CD14-positive monocyte (primary cell): ENCODE measurements at regions of chr15 and their contacts with region 1.

Region 1: GRCh38 chr15:74768771-74769342 is 13.0 kb upstream of the CSK start:
- DNase-seq: peak; percentile 60 to 75 (median 71)
- H3K4me3 ChIP-seq: no peak overlapping the region
- H3K4me3 Mint-ChIP-seq: peak overlapping the region in 1 of 2 donors; percentile 50
- H3K27ac ChIP-seq: no peak overlapping the region
- H3K27ac Mint-ChIP-seq: no peak overlapping the region
- H3K4me1 ChIP-seq: peaks cover 12 to 19% of the 10 kb centered on the region in 2 donors
- H3K4me1 Mint-ChIP-seq: peaks cover 20% of the 10 kb centered on the region
- H3K27me3 ChIP-seq: peaks cover 0 to 3% of the 10 kb centered on the region in 2 donors
- H3K27me3 Mint-ChIP-seq: peaks cover 9 to 16% (median 11%) of the 10 kb centered on the region in 3 donors
- CTCF ChIP-seq: peak; percentile 86

Region 2: GRCh38 chr15:74373731-74374647 is 394.9 kb before region 1 on chr15:
- intact Hi-C with region 1: loop called (anchors 5 to 10 kb)
- DNase-seq: peak; percentile 80 to 87 (median 83)
- H3K4me3 ChIP-seq: peak overlapping the region; percentile 46 to 82 (median 63)
- H3K4me3 Mint-ChIP-seq: peak overlapping the region; percentile 75 to 88
- H3K27ac ChIP-seq: no peak overlapping the region
- H3K27ac Mint-ChIP-seq: no peak overlapping the region
- H3K4me1 ChIP-seq: peaks cover 14 to 19% of the 10 kb centered on the region in 2 donors
- H3K4me1 Mint-ChIP-seq: peaks cover 20% of the 10 kb centered on the region
- H3K27me3 ChIP-seq: peaks cover 3 to 21% of the 10 kb centered on the region in 2 donors
- H3K27me3 Mint-ChIP-seq: peaks cover 23 to 51% (median 26%) of the 10 kb centered on the region in 3 donors
- CTCF ChIP-seq: peak; percentile 97

Region 3: GRCh38 chr15:74635228-74635627 is 133.6 kb before region 1 on chr15:
- intact Hi-C with region 1: loop called (anchors 1 to 2 kb)
- DNase-seq: peak; percentile 59 to 71 (median 69)
- H3K4me3 ChIP-seq: no peak overlapping the region
- H3K4me3 Mint-ChIP-seq: no peak overlapping the region
- H3K27ac ChIP-seq: no peak overlapping the region
- H3K27ac Mint-ChIP-seq: no peak overlapping the region
- H3K4me1 ChIP-seq: no peaks in the 10 kb centered on the region
- H3K4me1 Mint-ChIP-seq: no peaks in the 10 kb centered on the region
- H3K27me3 ChIP-seq: no peaks in the 10 kb centered on the region
- H3K27me3 Mint-ChIP-seq: peaks cover 0 to 2% (median 0%) of the 10 kb centered on the region in 3 donors
- CTCF ChIP-seq: peak; percentile 97

Region 4: GRCh38 chr15:74787251-74788041 is 18.6 kb after region 1 on chr15:
- intact Hi-C with region 1: loop called (anchors 2 kb)
- DNase-seq: peak; percentile 92 to 96 (median 95)
- H3K4me3 ChIP-seq: peak overlapping the region in 2 of 3 experiments; percentile 46 to 100
- H3K4me3 Mint-ChIP-seq: peak overlapping the region; percentile 94 to 95
- H3K27ac ChIP-seq: peak overlapping the region; percentile 96 to 97
- H3K27ac Mint-ChIP-seq: peak overlapping the region; percentile 99 to 100 (median 100)
- H3K4me1 ChIP-seq: peaks cover 91 to 95% of the 10 kb centered on the region in 2 donors
- H3K4me1 Mint-ChIP-seq: peaks cover 86% of the 10 kb centered on the region
- H3K27me3 ChIP-seq: no peaks in the 10 kb centered on the region
- H3K27me3 Mint-ChIP-seq: peaks cover 0 to 2% (median 0%) of the 10 kb centered on the region in 3 donors
- CTCF ChIP-seq: peak; percentile 82

Region 5: GRCh38 chr15:74793135-74794028 is 24.5 kb after region 1 on chr15:
- intact Hi-C with region 1: loop called in 1 of 2 experiments (anchors 2 kb)
- DNase-seq: peak; percentile 60 to 74 (median 66)
- H3K4me3 ChIP-seq: peak overlapping the region in 1 of 3 experiments; percentile 100
- H3K4me3 Mint-ChIP-seq: no peak overlapping the region
- H3K27ac ChIP-seq: peak overlapping the region; percentile 33 to 97
- H3K27ac Mint-ChIP-seq: peak overlapping the region; percentile 30 to 100 (median 89)
- H3K4me1 ChIP-seq: peaks cover 68 to 88% of the 10 kb centered on the region in 2 donors
- H3K4me1 Mint-ChIP-seq: peaks cover 76% of the 10 kb centered on the region
- H3K27me3 ChIP-seq: no peaks in the 10 kb centered on the region
- H3K27me3 Mint-ChIP-seq: no peaks in the 10 kb centered on the region
- CTCF ChIP-seq: peak; percentile 68

Region 6: GRCh38 chr15:74799856-74800547 is 31.1 kb after region 1 on chr15:
- intact Hi-C with region 1: loop called (anchors 1 kb)
- DNase-seq: peak; percentile 95 to 98 (median 96)
- H3K4me3 ChIP-seq: no peak overlapping the region
- H3K4me3 Mint-ChIP-seq: no peak overlapping the region
- H3K27ac ChIP-seq: peak overlapping the region; percentile 64 to 93
- H3K27ac Mint-ChIP-seq: peak overlapping the region; percentile 93 to 98 (median 96)
- H3K4me1 ChIP-seq: peaks cover 36 to 49% of the 10 kb centered on the region in 2 donors
- H3K4me1 Mint-ChIP-seq: peaks cover 44% of the 10 kb centered on the region
- H3K27me3 ChIP-seq: no peaks in the 10 kb centered on the region
- H3K27me3 Mint-ChIP-seq: peaks cover 0 to 1% (median 1%) of the 10 kb centered on the region in 3 donors
- CTCF ChIP-seq: peak; percentile 98

Region 7: GRCh38 chr15:75215107-75216004 is 446.5 kb after region 1 on chr15:
- intact Hi-C with region 1: no loop called
- DNase-seq: no peak
- H3K4me3 ChIP-seq: no peak overlapping the region
- H3K4me3 Mint-ChIP-seq: no peak overlapping the region
- H3K27ac ChIP-seq: peak overlapping the region; percentile 15 to 45
- H3K27ac Mint-ChIP-seq: peak overlapping the region in 5 of 7 donors; percentile 28 to 68 (median 60)
- H3K4me1 ChIP-seq: peaks cover 6 to 11% of the 10 kb centered on the region in 2 donors
- H3K4me1 Mint-ChIP-seq: peaks cover 36% of the 10 kb centered on the region
- H3K27me3 ChIP-seq: no peaks in the 10 kb centered on the region
- H3K27me3 Mint-ChIP-seq: peaks cover 0 to 3% (median 0%) of the 10 kb centered on the region in 3 donors
- CTCF ChIP-seq: no peak